CD4-positive, alpha-beta memory T cell (primary cell): ENCODE measurements at regions of chr2 and their contacts with region 1.

Region 1: GRCh38 chr2:197310271-197310985 is at the start of gene ANKRD44:
- DNase-seq: peak; percentile 91 to 94 (median 94)
- H3K4me3 ChIP-seq: peak within 1 kb of the TSS; percentile 65 to 87
- H3K4me3 Mint-ChIP-seq: peak within 1 kb of the TSS; percentile 91 to 97 (median 95)
- H3K27ac ChIP-seq: peak within 1 kb of the TSS; percentile 93
- H3K27ac Mint-ChIP-seq: peak within 1 kb of the TSS; percentile 94 to 97 (median 96)
- H3K4me1 ChIP-seq: peaks cover 55% of the 10 kb centered on the region
- H3K4me1 Mint-ChIP-seq: peaks cover 46 to 74% (median 56%) of the 10 kb centered on the region in 4 donors
- H3K27me3 ChIP-seq: no peaks in the 10 kb centered on the region
- H3K27me3 Mint-ChIP-seq: no peaks in the 10 kb centered on the region
- total RNA-seq, gene ANKRD44: 229 to 248 TPM

Region 2: DNA sequence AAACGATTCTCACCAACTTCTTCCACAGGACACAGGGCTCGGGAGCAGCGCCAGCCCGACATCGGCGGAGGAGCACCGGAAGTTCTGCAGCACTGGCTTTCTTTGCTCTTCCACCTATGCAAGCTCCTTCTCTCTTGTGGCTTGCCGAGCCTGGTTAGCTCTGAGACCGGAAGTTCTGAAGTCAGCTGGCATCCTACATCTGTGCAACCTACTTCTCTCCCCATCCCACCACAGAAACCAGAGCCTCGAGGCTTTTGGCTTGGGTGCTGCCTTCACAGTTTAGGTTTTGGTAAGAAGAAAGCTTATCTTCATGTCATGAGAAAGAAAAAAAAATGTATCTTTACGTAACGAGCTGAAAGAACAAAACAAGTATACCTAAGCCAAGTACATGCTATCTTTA is 111.5 kb before region 1 on chr2:
- CTCF ChIA-PET with region 1: interaction called, 146 read pairs
- POLR2A ChIA-PET with region 1: interaction called, 1,065 read pairs
- intact Hi-C with region 1: loop called (anchors 1 kb)
- DNase-seq: peak; percentile 93 to 97 (median 96)
- H3K4me3 ChIP-seq: no peak overlapping the region
- H3K4me3 Mint-ChIP-seq: peak overlapping the region; percentile 84 to 99 (median 91)
- H3K27ac ChIP-seq: peak overlapping the region; percentile 73
- H3K27ac Mint-ChIP-seq: peak overlapping the region; percentile 95 to 99 (median 96)
- H3K4me1 ChIP-seq: peaks cover 93% of the 10 kb centered on the region
- H3K4me1 Mint-ChIP-seq: peaks cover 74 to 96% (median 86%) of the 10 kb centered on the region in 4 donors
- H3K27me3 ChIP-seq: no peaks in the 10 kb centered on the region
- H3K27me3 Mint-ChIP-seq: no peaks in the 10 kb centered on the region

Region 3: DNA sequence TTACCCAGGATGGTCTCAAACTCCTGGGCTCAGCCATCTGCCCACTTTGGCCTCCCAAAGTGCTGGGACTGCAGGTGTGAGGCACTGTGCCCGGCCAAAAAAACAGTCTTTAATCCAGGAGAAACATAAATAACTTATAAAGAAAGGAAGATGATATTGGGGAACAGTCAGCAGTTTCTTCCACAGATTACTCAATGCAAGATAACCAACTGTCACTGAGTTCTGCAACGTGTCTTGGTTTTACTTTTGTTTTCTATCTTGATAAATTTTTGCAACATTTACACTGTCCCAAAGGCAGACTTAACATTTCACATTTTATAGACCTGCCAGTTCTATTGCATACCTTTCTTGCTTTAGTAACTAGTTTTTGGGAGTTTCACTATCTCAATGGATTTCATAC is 71.0 kb before region 1 on chr2:
- CTCF ChIA-PET with region 1: interaction called, 48 read pairs
- POLR2A ChIA-PET with region 1: interaction called, 606 read pairs
- intact Hi-C with region 1: loop called (anchors 2 kb)
- DNase-seq: no peak
- H3K4me3 ChIP-seq: peak overlapping the region in 1 of 2 donors; percentile 52
- H3K4me3 Mint-ChIP-seq: peak overlapping the region; percentile 80 to 96 (median 87)
- H3K27ac ChIP-seq: peak overlapping the region; percentile 66
- H3K27ac Mint-ChIP-seq: peak overlapping the region; percentile 87 to 99 (median 95)
- H3K4me1 ChIP-seq: peaks cover 97% of the 10 kb centered on the region
- H3K4me1 Mint-ChIP-seq: peaks cover 70 to 93% (median 78%) of the 10 kb centered on the region in 4 donors
- H3K27me3 ChIP-seq: no peaks in the 10 kb centered on the region
- H3K27me3 Mint-ChIP-seq: no peaks in the 10 kb centered on the region

Region 4: DNA sequence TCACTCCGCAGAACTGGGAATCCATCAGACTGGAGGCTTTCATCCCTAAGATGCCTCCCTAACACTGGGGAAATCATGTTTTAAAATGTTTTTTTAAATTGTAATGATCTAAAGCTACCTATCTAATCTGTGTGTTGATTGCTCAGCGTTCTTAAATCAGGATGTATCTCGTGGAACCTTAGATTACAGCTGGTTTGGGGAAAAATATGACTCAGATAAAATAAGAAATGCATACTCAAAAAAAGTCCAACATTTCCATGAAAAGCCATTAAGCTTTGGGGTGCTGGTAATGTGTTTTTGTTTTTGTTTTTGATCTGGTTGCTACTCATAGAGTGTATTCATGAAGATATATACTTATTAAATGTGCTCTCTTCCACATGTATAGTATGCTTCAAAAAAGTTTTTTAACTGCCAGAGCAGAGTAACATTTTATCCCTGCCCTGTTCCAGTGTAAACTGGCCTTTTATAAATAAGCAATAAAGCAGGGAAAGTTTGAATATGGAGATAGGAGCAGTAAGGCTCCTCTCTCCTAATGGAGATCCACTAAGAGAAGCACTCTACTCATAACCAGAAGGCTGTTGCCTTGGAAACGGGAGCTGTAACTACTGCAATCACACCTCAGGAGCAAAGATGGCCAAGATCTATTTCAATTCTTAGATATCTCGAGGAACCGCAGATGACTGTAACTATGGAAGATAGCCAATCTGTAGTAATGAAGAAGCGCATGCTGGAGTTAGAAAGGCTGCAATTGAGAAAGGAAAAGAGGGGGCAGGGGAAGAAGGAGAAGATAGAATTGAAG is 41.4 kb before region 1 on chr2:
- CTCF ChIA-PET with region 1: interaction called, 24 read pairs
- POLR2A ChIA-PET with region 1: interaction called, 156 read pairs
- intact Hi-C with region 1: loop called (anchors 2 kb)
- DNase-seq: peak in 3 of 5 donors; percentile 50 to 81 (median 61)
- H3K4me3 ChIP-seq: no peak overlapping the region
- H3K4me3 Mint-ChIP-seq: peak overlapping the region in 7 of 8 donors; percentile 11 to 64 (median 59)
- H3K27ac ChIP-seq: peak overlapping the region; percentile 35
- H3K27ac Mint-ChIP-seq: peak overlapping the region; percentile 77 to 98 (median 87)
- H3K4me1 ChIP-seq: peaks cover 98% of the 10 kb centered on the region
- H3K4me1 Mint-ChIP-seq: peaks cover 71 to 99% (median 89%) of the 10 kb centered on the region in 4 donors
- H3K27me3 ChIP-seq: no peaks in the 10 kb centered on the region
- H3K27me3 Mint-ChIP-seq: no peaks in the 10 kb centered on the region

Region 5: GRCh38 chr2:197322724-197323720 is 12.6 kb after region 1 on chr2:
- CTCF ChIA-PET with region 1: interaction called, 43 read pairs
- POLR2A ChIA-PET with region 1: interaction called, 71 read pairs
- intact Hi-C with region 1: no loop called
- DNase-seq: peak in 3 of 5 donors; percentile 36 to 41 (median 36)
- H3K4me3 ChIP-seq: peak overlapping the region; percentile 44 to 48
- H3K4me3 Mint-ChIP-seq: peak overlapping the region; percentile 49 to 86 (median 76)
- H3K27ac ChIP-seq: peak overlapping the region; percentile 36
- H3K27ac Mint-ChIP-seq: peak overlapping the region; percentile 82 to 97 (median 94)
- H3K4me1 ChIP-seq: peaks cover 67% of the 10 kb centered on the region
- H3K4me1 Mint-ChIP-seq: peaks cover 40 to 71% (median 61%) of the 10 kb centered on the region in 4 donors
- H3K27me3 ChIP-seq: no peaks in the 10 kb centered on the region
- H3K27me3 Mint-ChIP-seq: no peaks in the 10 kb centered on the region

Region 6: DNA sequence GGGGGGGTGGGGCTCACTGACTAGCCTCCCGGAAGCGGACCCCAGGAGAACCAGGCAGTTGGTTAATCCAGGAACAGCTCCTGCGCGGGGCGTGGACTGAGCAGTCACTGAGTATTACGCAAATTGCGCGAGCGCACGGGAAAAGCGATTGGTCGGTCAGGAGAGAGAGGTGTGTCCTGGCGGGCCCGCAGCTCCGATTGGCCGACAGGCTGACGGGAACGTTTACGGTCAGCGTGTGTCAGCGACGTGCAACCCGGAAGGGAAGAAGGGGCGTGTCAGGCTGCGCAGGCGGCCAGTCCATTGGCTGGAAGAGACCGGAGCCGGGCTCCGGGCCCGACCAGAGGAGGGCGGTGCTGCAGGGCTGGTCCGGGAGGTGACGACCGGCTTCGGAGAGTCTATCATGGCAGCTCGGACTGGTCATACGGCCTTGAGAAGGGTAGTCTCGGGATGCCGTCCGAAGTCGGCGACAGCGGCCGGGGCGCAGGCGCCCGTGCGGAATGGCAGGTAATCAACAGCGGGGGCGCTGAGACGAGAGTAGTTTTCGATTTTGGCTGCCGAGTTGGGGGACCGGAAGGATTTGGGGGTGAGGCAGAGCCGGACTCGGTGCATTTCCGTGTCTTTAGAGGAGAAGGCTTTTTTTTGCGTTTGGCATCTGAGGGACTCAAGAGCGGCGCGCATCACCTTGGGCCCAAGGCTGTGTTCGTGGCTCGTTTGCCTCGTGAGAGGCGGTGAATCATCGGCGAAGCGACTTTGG is 142.9 kb after region 1 on chr2 and contains the start of gene COQ10B:
- CTCF ChIA-PET with region 1: no interaction called
- POLR2A ChIA-PET with region 1: no interaction called
- intact Hi-C with region 1: loop called (anchors 1 kb)
- DNase-seq: peak; percentile 97 to 99 (median 99)
- H3K4me3 ChIP-seq: peak within 1 kb of the TSS; percentile 87 to 88
- H3K4me3 Mint-ChIP-seq: peak within 1 kb of the TSS; percentile 96 to 100 (median 99)
- H3K27ac ChIP-seq: peak within 1 kb of the TSS; percentile 99
- H3K27ac Mint-ChIP-seq: peak within 1 kb of the TSS; percentile 99 to 100 (median 100)
- H3K4me1 ChIP-seq: peaks cover 36% of the 10 kb centered on the region
- H3K4me1 Mint-ChIP-seq: peaks cover 28 to 65% (median 41%) of the 10 kb centered on the region in 4 donors
- H3K27me3 ChIP-seq: no peaks in the 10 kb centered on the region
- H3K27me3 Mint-ChIP-seq: peaks cover 2 to 3% of the 10 kb centered on the region in 2 donors
- total RNA-seq, gene COQ10B: 31.7 to 33.1 TPM